GM12878 (cell line): ENCODE measurements at regions of chr17 and their contacts with region 1.

Region 1: GRCh38 chr17:10716218-10716617 is 13.6 kb downstream of the TMEM220 start:
- DNase-seq: no peak
- ATAC-seq: no peak
- H3K4me3 ChIP-seq: no peak overlapping the region
- H3K27ac ChIP-seq: no peak overlapping the region
- H3K4me1 ChIP-seq: no peaks in the 10 kb centered on the region
- H3K27me3 ChIP-seq: no peaks in the 10 kb centered on the region
- CTCF ChIP-seq: no peak
- EP300 ChIP-seq: no peak
- POLR2A ChIP-seq: no peak
- RAD21 ChIP-seq: no peak

Region 2: GRCh38 chr17:10652984-10653659 is 63.1 kb before region 1 on chr17:
- CTCF ChIA-PET with region 1: no interaction called
- POLR2A ChIA-PET with region 1: no interaction called
- RAD21 ChIA-PET with region 1: no interaction called
- SMC1A ChIA-PET with region 1: no interaction called
- in situ Hi-C with region 1: no loop called
- intact Hi-C with region 1: no loop called
- DNase-seq: no peak
- ATAC-seq: peak; percentile 56
- H3K4me3 ChIP-seq: no peak overlapping the region
- H3K27ac ChIP-seq: no peak overlapping the region
- H3K4me1 ChIP-seq: no peaks in the 10 kb centered on the region
- H3K27me3 ChIP-seq: no peaks in the 10 kb centered on the region; a peak in 1 of 4 replicates
- CTCF ChIP-seq: no peak
- EP300 ChIP-seq: no peak
- POLR2A ChIP-seq: no peak
- RAD21 ChIP-seq: no peak

Region 3: DNA sequence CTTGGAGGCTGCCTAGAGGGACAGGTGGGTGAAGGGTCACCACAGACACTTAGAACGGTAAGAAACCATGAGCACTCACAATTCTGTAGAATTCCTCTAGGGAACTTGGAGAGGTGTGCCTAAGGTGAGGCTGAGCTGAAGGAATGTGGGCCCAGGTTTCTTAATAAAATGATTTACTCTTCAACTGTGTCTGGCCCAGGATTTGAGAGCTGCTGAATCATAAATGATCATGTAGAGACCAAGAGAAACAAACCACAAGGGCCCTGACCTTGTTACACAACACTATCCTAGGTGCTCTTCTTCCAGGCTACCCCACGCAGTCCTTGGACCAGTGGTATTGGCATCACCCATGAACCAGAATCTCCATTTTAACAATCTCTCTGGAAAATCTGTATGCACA is 1253.3 kb after region 1 on chr17:
- CTCF ChIA-PET with region 1: no interaction called
- POLR2A ChIA-PET with region 1: no interaction called
- RAD21 ChIA-PET with region 1: no interaction called
- SMC1A ChIA-PET with region 1: no interaction called
- in situ Hi-C with region 1: no loop called
- intact Hi-C with region 1: loop called (anchors 5 kb)
- DNase-seq: no peak
- ATAC-seq: no peak
- H3K4me3 ChIP-seq: no peak overlapping the region
- H3K27ac ChIP-seq: no peak overlapping the region
- H3K4me1 ChIP-seq: no peaks in the 10 kb centered on the region
- H3K27me3 ChIP-seq: no peaks in the 10 kb centered on the region
- CTCF ChIP-seq: no peak
- EP300 ChIP-seq: no peak
- POLR2A ChIP-seq: no peak
- RAD21 ChIP-seq: no peak